ENCODE measurements at regions of chr10 and their contacts with region 1.

Region 1: DNA sequence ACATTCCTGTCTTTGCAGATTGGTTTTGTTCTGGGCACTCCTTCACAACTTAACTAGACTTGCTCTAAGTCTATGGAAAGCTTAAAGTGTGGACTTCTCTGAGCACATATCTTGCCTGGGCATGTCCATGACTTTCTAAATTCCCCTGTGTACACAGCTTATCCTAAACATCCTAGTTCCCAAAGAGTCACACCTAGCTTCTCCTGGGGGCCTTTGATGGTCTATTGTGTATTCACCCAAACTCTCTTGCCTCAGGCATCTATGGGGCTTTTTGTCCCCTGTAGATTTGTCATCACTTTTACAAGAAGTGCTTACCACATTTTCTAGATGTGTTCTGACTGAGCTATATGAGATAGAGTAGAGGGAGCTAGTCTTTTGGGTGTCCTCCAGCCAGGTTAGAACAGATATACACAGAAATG is 12.2 kb upstream of the ZNF488 start:
- DNase-seq: peak; percentile 82
- H3K4me3 Mint-ChIP-seq: peak overlapping the region; percentile 0
- H3K27ac Mint-ChIP-seq: peak overlapping the region; percentile 97
- H3K4me1 Mint-ChIP-seq: peaks cover 18% of the 10 kb centered on the region
- H3K27me3 Mint-ChIP-seq: no peaks in the 10 kb centered on the region
- CTCF ChIP-seq: no peak

Region 2: GRCh38 chr10:47361293-47361692 is 35.0 kb before region 1 on chr10:
- CTCF ChIA-PET with region 1: interaction called, 12 read pairs
- POLR2A ChIA-PET with region 1: no interaction called
- intact Hi-C with region 1: no loop called
- DNase-seq: peak; percentile 60
- H3K4me3 Mint-ChIP-seq: no peak overlapping the region
- H3K27ac Mint-ChIP-seq: no peak overlapping the region
- H3K4me1 Mint-ChIP-seq: no peaks in the 10 kb centered on the region
- H3K27me3 Mint-ChIP-seq: no peaks in the 10 kb centered on the region
- CTCF ChIP-seq: peak; percentile 72

Region 3: GRCh38 chr10:47374611-47375536 is 21.4 kb before region 1 on chr10:
- CTCF ChIA-PET with region 1: no interaction called
- POLR2A ChIA-PET with region 1: interaction called, 10 read pairs
- intact Hi-C with region 1: no loop called
- DNase-seq: no peak
- H3K4me3 Mint-ChIP-seq: no peak overlapping the region
- H3K27ac Mint-ChIP-seq: no peak overlapping the region
- H3K4me1 Mint-ChIP-seq: peaks cover 8% of the 10 kb centered on the region
- H3K27me3 Mint-ChIP-seq: peaks cover 37% of the 10 kb centered on the region
- CTCF ChIP-seq: no peak

Region 4: DNA sequence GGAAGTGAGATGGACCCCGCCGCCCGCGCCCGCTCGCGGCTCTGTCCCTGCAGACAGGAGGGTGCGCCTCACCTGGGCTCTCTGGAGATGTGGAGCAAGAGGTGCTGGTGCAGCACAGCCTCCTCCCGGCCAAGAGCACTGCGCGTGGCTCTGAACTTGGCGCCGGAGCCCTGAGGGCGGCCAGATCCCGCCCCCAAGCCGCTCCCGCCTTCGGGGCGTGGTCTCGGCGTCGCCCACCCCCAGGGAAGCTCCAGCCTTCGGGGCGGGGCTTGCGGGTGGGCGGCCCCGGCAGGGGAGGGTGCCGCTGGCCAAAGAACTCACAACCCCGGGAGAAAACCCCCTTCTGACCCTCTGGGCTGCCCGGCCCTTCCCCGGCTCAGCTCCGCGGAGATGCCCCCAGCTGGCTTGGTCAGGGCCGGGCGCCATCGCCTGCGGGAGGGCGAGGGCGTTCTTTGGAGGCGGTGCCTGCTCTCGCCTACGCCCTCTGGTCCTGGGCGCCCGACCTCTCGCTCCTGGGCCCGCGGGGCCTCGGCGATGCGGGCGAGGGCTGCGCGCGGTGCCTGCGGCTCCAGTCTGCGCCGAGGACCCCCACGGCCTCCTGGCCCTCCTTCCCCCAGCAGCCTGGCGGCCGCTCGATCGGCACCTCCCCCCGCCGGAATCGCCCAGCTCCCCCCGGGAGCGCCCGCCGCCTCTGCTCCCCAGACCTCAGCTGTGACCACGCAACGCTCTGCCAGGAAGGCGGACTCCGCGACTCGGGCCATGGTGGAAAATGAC is 12.0 kb before region 1 on chr10 and contains the start of gene ZNF488:
- CTCF ChIA-PET with region 1: no interaction called
- POLR2A ChIA-PET with region 1: interaction called, 57 read pairs
- intact Hi-C with region 1: no loop called
- DNase-seq: peak; percentile 88
- H3K4me3 Mint-ChIP-seq: peak within 1 kb of the TSS; percentile 63
- H3K27ac Mint-ChIP-seq: peak within 1 kb of the TSS; percentile 55
- H3K4me1 Mint-ChIP-seq: peaks cover 8% of the 10 kb centered on the region
- H3K27me3 Mint-ChIP-seq: peaks cover 20% of the 10 kb centered on the region
- CTCF ChIP-seq: no peak
- total RNA-seq, gene ZNF488: 0.12 TPM in 2 replicates